WTC11 (cell line): ENCODE measurements at regions of chr6 and their contacts with region 1.

Region 1: GRCh38 chr6:26196846-26197648 is 109.8 kb downstream of the HFE start:
- DNase-seq: peak; percentile 75
- ATAC-seq: peak; percentile 43
- H3K4me3 Mint-ChIP-seq: peak overlapping the region; percentile 99
- H3K27ac Mint-ChIP-seq: peak overlapping the region; percentile 100
- H3K4me1 Mint-ChIP-seq: peaks cover 39% of the 10 kb centered on the region
- H3K27me3 Mint-ChIP-seq: no peaks in the 10 kb centered on the region
- CTCF ChIP-seq: no peak

Region 2: DNA sequence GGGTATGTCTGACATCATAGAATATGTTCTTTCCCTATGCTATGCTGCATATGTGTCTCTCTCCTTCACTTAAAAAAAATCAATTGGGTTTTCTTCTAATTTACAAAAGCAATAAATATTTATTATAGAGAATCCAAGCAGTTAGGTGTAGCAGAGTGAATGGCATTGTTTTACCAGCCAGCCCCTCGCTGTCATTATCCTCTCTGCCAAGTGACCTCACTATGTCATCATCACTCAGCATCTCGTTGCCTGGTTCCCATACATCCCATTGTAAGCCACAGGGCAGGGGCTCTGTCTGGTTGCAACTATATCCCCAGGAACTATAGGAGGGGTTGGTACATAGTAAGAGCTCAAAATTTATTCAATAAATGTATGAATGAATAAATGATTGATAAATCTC is 1582.4 kb before region 1 on chr6:
- CTCF ChIA-PET with region 1: no interaction called
- POLR2A ChIA-PET with region 1: interaction called, 10 read pairs
- DNase-seq: no peak
- ATAC-seq: no peak
- H3K4me3 Mint-ChIP-seq: no peak overlapping the region
- H3K27ac Mint-ChIP-seq: no peak overlapping the region
- H3K4me1 Mint-ChIP-seq: peaks cover 21% of the 10 kb centered on the region
- H3K27me3 Mint-ChIP-seq: no peaks in the 10 kb centered on the region
- CTCF ChIP-seq: no peak

Region 3: GRCh38 chr6:26103770-26104456 is 93.1 kb before region 1 on chr6:
- CTCF ChIA-PET with region 1: no interaction called
- POLR2A ChIA-PET with region 1: interaction called, 43 read pairs
- DNase-seq: peak; percentile 73
- ATAC-seq: peak; percentile 79
- H3K4me3 Mint-ChIP-seq: peak overlapping the region; percentile 84
- H3K27ac Mint-ChIP-seq: peak overlapping the region; percentile 98
- H3K4me1 Mint-ChIP-seq: peaks cover 23% of the 10 kb centered on the region
- H3K27me3 Mint-ChIP-seq: no peaks in the 10 kb centered on the region
- CTCF ChIP-seq: no peak

Region 4: GRCh38 chr6:26223650-26224546 is 26.9 kb after region 1 on chr6:
- CTCF ChIA-PET with region 1: no interaction called
- POLR2A ChIA-PET with region 1: interaction called, 130 read pairs
- DNase-seq: no peak
- ATAC-seq: peak; percentile 69
- H3K4me3 Mint-ChIP-seq: no peak overlapping the region
- H3K27ac Mint-ChIP-seq: no peak overlapping the region
- H3K4me1 Mint-ChIP-seq: peaks cover 42% of the 10 kb centered on the region
- H3K27me3 Mint-ChIP-seq: no peaks in the 10 kb centered on the region
- CTCF ChIP-seq: no peak

Region 5: DNA sequence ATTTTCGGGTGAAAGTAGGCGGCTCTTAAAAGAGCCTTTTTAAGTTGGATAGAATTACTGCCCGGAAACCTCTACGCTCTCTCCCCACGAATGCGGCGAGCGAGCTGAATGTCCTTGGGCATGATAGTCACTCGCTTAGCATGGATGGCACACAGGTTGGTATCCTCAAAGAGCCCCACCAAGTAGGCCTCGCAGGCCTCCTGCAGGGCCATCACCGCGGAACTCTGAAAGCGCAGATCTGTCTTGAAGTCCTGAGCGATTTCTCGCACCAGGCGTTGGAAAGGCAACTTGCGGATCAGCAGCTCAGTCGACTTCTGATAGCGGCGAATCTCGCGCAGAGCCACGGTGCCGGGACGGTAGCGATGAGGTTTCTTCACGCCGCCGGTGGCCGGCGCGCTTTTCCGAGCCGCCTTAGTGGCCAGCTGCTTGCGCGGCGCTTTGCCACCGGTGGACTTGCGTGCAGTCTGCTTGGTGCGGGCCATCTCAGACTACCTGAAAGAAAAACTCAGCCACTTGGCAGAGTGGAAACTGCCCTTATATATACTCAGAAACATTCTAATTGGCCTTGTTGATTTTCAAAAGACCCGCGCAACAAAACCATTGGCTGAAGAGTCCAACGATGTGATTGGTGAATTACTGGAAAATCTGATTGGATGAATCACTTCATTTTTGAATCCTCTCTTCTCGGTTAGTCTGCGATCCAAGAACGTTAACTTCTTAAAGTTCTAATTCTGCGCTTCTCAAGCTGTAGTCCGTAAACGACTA is 74.0 kb after region 1 on chr6:
- CTCF ChIA-PET with region 1: interaction called, 3 read pairs
- POLR2A ChIA-PET with region 1: interaction called, 152 read pairs
- DNase-seq: peak; percentile 65
- ATAC-seq: peak; percentile 28
- H3K4me3 Mint-ChIP-seq: no peak overlapping the region
- H3K27ac Mint-ChIP-seq: no peak overlapping the region
- H3K4me1 Mint-ChIP-seq: peaks cover 35% of the 10 kb centered on the region
- H3K27me3 Mint-ChIP-seq: no peaks in the 10 kb centered on the region
- CTCF ChIP-seq: no peak

Region 6: GRCh38 chr6:27809939-27810767 is 1613.1 kb after region 1 on chr6:
- CTCF ChIA-PET with region 1: no interaction called
- POLR2A ChIA-PET with region 1: interaction called, 33 read pairs
- DNase-seq: peak; percentile 58
- ATAC-seq: peak; percentile 7
- H3K4me3 Mint-ChIP-seq: peak overlapping the region; percentile 98
- H3K27ac Mint-ChIP-seq: peak overlapping the region; percentile 98
- H3K4me1 Mint-ChIP-seq: peaks cover 45% of the 10 kb centered on the region
- H3K27me3 Mint-ChIP-seq: peaks cover 3% of the 10 kb centered on the region
- CTCF ChIP-seq: no peak

Region 7: GRCh38 chr6:27893059-27893835 is 1696.2 kb after region 1 on chr6:
- CTCF ChIA-PET with region 1: no interaction called
- POLR2A ChIA-PET with region 1: interaction called, 31 read pairs
- DNase-seq: peak; percentile 91
- ATAC-seq: peak; percentile 46
- H3K4me3 Mint-ChIP-seq: no peak overlapping the region
- H3K27ac Mint-ChIP-seq: peak overlapping the region; percentile 99
- H3K4me1 Mint-ChIP-seq: peaks cover 42% of the 10 kb centered on the region
- H3K27me3 Mint-ChIP-seq: no peaks in the 10 kb centered on the region; the same call in 1 of the 2 replicates
- CTCF ChIP-seq: no peak